ENCODE measurements at regions of chr12 and their contacts with region 1.

Region 1: DNA sequence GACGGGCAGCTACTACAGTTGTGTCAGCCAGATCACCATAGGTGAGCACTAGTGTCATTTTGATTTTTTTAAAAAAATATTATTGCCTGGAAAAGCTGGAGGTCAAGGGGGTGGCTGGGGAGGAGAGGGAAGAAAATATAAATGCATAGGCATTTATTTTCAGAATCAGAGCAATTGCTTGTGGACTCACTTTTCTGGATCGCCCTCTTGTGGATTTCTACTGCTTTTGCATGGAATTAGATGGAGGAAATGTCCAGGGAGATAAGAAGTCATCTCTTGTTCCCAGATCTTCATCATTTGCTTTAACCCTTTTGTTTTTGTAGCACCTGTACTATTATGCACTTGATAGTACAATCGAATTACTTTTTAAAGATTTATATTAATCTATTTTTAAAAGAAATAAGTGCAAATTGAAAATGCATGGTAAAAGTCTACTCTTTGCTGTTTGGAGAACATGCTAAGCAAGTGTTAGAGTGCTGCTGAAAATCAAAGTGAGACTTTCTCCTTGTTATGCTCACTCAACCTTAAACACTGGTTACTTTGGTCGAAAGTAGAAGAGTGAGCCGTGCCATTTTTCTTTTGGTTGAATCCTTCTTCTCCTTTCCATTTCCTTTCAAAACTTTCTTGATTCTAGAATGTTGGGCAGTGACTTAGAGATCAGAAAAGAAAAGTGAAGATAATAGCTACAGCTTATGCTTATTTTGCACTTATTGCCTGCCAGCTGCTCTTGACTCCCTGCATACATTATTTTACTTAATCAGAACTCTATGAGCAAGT is 60.6 kb upstream of the ANO4 start:
- H3K4me3 ChIP-seq: no peak overlapping the region
- H3K27ac ChIP-seq: no peak overlapping the region
- H3K4me1 ChIP-seq: no peaks in the 10 kb centered on the region
- CTCF ChIP-seq: peak; percentile 21; the same call in 1 of the 2 replicates

Region 2: GRCh38 chr12:100672075-100672592 is 61.9 kb before region 1 on chr12:
- CTCF ChIA-PET with region 1: interaction called, 17 read pairs
- POLR2A ChIA-PET with region 1: no interaction called
- H3K4me3 ChIP-seq: no peak overlapping the region
- H3K27ac ChIP-seq: no peak overlapping the region
- H3K4me1 ChIP-seq: no peaks in the 10 kb centered on the region
- CTCF ChIP-seq: no peak; the same call in 1 of the 2 replicates

Region 3: DNA sequence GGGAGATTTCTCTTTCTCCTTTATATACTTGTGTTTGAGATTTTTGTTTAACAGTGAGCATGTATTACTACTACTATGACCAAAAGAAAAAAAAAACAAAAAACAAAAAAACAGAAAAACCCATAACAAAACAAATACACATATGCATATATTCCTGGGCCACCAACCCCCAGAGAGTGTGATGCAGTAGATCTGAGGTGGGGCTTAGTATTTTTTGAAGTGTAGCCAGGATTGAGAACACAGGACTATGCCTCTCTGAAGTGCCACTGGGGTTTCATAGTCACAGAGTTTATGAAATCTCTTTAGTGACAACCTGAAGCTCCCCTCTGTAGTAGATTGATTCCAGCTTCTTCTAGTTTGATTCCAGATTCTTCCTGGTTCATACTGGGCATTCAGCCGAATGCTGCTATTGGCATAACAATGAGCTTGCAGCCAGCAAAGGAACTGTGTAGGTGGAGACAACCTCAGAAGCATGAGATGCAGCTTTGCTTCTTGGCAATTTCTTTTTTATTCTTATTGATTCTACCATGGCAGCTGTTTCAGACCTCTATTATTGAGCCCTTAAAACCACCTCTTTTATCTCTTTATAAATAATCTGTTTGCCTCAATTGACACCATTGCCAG is 45.1 kb after region 1 on chr12:
- CTCF ChIA-PET with region 1: no interaction called
- POLR2A ChIA-PET with region 1: no interaction called
- H3K4me3 ChIP-seq: no peak overlapping the region
- H3K27ac ChIP-seq: no peak overlapping the region
- H3K4me1 ChIP-seq: no peaks in the 10 kb centered on the region
- CTCF ChIP-seq: no peak

Measured in HEK293 (cell line).